ENCODE measurements at regions of chr5 and their contacts with region 1.

Region 1: GRCh38 chr5:68287976-68288706 is 72.6 kb downstream of the PIK3R1 start:
- DNase-seq: peak; percentile 36
- H3K4me3 Mint-ChIP-seq: peak overlapping the region; percentile 88
- H3K27ac Mint-ChIP-seq: peak overlapping the region; percentile 81
- H3K4me1 Mint-ChIP-seq: peaks cover 85% of the 10 kb centered on the region
- H3K27me3 Mint-ChIP-seq: no peaks in the 10 kb centered on the region

Region 2: GRCh38 chr5:68141494-68141893 is 146.6 kb before region 1 on chr5:
- intact Hi-C with region 1: no loop called
- DNase-seq: no peak
- H3K4me3 Mint-ChIP-seq: no peak overlapping the region
- H3K27ac Mint-ChIP-seq: no peak overlapping the region
- H3K4me1 Mint-ChIP-seq: peaks cover 5% of the 10 kb centered on the region
- H3K27me3 Mint-ChIP-seq: no peaks in the 10 kb centered on the region

Region 3: GRCh38 chr5:68272289-68272688 is 15.9 kb before region 1 on chr5:
- intact Hi-C with region 1: loop called (anchors 2 kb)
- DNase-seq: no peak
- H3K4me3 Mint-ChIP-seq: no peak overlapping the region
- H3K27ac Mint-ChIP-seq: no peak overlapping the region
- H3K4me1 Mint-ChIP-seq: peaks cover 81% of the 10 kb centered on the region
- H3K27me3 Mint-ChIP-seq: no peaks in the 10 kb centered on the region

Region 4: GRCh38 chr5:68369457-68370125 is 81.5 kb after region 1 on chr5:
- intact Hi-C with region 1: loop called (anchors 5 kb)
- DNase-seq: peak; percentile 48
- H3K4me3 Mint-ChIP-seq: peak overlapping the region; percentile 46
- H3K27ac Mint-ChIP-seq: peak overlapping the region; percentile 79
- H3K4me1 Mint-ChIP-seq: peaks cover 61% of the 10 kb centered on the region
- H3K27me3 Mint-ChIP-seq: peaks cover 1% of the 10 kb centered on the region

Region 5: GRCh38 chr5:68433923-68434879 is 146.1 kb after region 1 on chr5:
- intact Hi-C with region 1: loop called (anchors 1 kb)
- DNase-seq: peak; percentile 88
- H3K4me3 Mint-ChIP-seq: peak overlapping the region; percentile 16
- H3K27ac Mint-ChIP-seq: peak overlapping the region; percentile 88
- H3K4me1 Mint-ChIP-seq: peaks cover 53% of the 10 kb centered on the region
- H3K27me3 Mint-ChIP-seq: peaks cover 30% of the 10 kb centered on the region

Region 6: GRCh38 chr5:68661237-68661636 is 373.1 kb after region 1 on chr5:
- intact Hi-C with region 1: loop called (anchors 1 kb)
- DNase-seq: no peak
- H3K4me3 Mint-ChIP-seq: no peak overlapping the region
- H3K27ac Mint-ChIP-seq: no peak overlapping the region
- H3K4me1 Mint-ChIP-seq: no peaks in the 10 kb centered on the region
- H3K27me3 Mint-ChIP-seq: peaks cover 2% of the 10 kb centered on the region

Region 7: DNA sequence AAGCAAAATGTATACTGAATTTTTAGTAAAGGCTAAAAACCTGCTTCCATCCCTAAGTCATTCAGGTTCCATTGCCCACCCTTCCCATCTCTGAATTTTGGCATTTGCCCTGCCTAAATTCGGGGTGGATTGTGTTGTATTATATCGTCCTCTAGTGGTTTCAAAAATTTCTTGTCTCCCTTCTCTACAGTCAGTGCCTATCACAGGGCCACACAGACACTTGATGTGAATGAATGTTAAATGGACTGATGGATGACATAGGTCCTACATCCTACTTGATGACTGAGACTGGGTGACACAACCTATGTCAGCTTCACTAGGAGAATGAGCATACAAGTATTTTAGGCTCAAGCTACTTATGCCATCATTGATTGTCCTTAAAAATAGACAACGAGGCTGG is 760.1 kb after region 1 on chr5:
- intact Hi-C with region 1: loop called (anchors 2 kb)
- DNase-seq: no peak
- H3K4me3 Mint-ChIP-seq: no peak overlapping the region
- H3K27ac Mint-ChIP-seq: no peak overlapping the region
- H3K4me1 Mint-ChIP-seq: peaks cover 5% of the 10 kb centered on the region
- H3K27me3 Mint-ChIP-seq: peaks cover under 1% of the 10 kb centered on the region